Activated CD8-positive, alpha-beta T cell treated with anti-CD3 and anti-CD28 coated beads for 36 hours (primary cell): ENCODE measurements at regions of chr11 and their contacts with region 1.

Region 1: GRCh38 chr11:57249384-57250319 is 12.6 kb upstream of the APLNR start:
- DNase-seq: peak; percentile 75
- ATAC-seq: peak; percentile 60
- H3K4me3 Mint-ChIP-seq: no peak overlapping the region
- H3K27ac Mint-ChIP-seq: no peak overlapping the region
- H3K4me1 Mint-ChIP-seq: peaks cover 3% of the 10 kb centered on the region
- H3K27me3 Mint-ChIP-seq: peaks cover 27% of the 10 kb centered on the region
- CTCF ChIP-seq: peak; percentile 86

Region 2: GRCh38 chr11:56841210-56841810 is 408.3 kb before region 1 on chr11:
- CTCF ChIA-PET with region 1: interaction called, 73 read pairs
- POLR2A ChIA-PET with region 1: no interaction called
- intact Hi-C with region 1: loop called (anchors 2 kb)
- DNase-seq: peak; percentile 54
- ATAC-seq: no peak
- H3K4me3 Mint-ChIP-seq: no peak overlapping the region
- H3K27ac Mint-ChIP-seq: no peak overlapping the region
- H3K4me1 Mint-ChIP-seq: no peaks in the 10 kb centered on the region
- H3K27me3 Mint-ChIP-seq: peaks cover 2% of the 10 kb centered on the region
- CTCF ChIP-seq: peak; percentile 71

Region 3: GRCh38 chr11:57001674-57002401 is 247.8 kb before region 1 on chr11:
- CTCF ChIA-PET with region 1: interaction called, 3 read pairs
- POLR2A ChIA-PET with region 1: no interaction called
- intact Hi-C with region 1: loop called (anchors 5 kb)
- DNase-seq: peak; percentile 2
- ATAC-seq: no peak
- H3K4me3 Mint-ChIP-seq: no peak overlapping the region
- H3K27ac Mint-ChIP-seq: no peak overlapping the region
- H3K4me1 Mint-ChIP-seq: no peaks in the 10 kb centered on the region
- H3K27me3 Mint-ChIP-seq: no peaks in the 10 kb centered on the region
- CTCF ChIP-seq: peak; percentile 51

Region 4: DNA sequence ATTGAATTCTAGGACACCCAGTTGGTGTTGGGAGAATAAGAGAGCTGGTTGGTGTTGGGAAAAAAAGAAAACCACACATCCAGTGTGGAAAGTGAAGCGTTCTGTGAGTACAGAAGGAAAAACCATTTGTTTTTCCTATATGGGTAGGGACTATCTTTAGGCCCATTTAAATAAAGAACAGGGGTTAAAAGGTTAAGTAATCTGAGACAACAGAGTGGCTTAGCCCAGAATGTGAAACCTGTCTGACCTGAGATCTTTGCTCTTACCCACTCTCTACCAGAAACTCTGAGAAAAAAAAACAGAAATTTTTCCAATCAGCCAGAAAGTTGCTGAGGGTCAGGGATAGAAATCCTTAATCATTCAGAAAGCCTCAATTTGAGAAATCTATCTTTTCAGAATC is 127.7 kb before region 1 on chr11:
- CTCF ChIA-PET with region 1: interaction called, 39 read pairs
- POLR2A ChIA-PET with region 1: no interaction called
- intact Hi-C with region 1: loop called (anchors 5 kb)
- DNase-seq: no peak
- ATAC-seq: no peak
- H3K4me3 Mint-ChIP-seq: no peak overlapping the region
- H3K27ac Mint-ChIP-seq: no peak overlapping the region
- H3K4me1 Mint-ChIP-seq: no peaks in the 10 kb centered on the region
- H3K27me3 Mint-ChIP-seq: peaks cover 22% of the 10 kb centered on the region
- CTCF ChIP-seq: no peak

Region 5: GRCh38 chr11:57231539-57232253 is 18.0 kb before region 1 on chr11:
- CTCF ChIA-PET with region 1: interaction called, 13 read pairs
- POLR2A ChIA-PET with region 1: interaction called, 3 read pairs
- intact Hi-C with region 1: no loop called
- DNase-seq: no peak
- ATAC-seq: no peak
- H3K4me3 Mint-ChIP-seq: no peak overlapping the region
- H3K27ac Mint-ChIP-seq: no peak overlapping the region
- H3K4me1 Mint-ChIP-seq: no peaks in the 10 kb centered on the region
- H3K27me3 Mint-ChIP-seq: peaks cover 52% of the 10 kb centered on the region
- CTCF ChIP-seq: no peak

Region 6: GRCh38 chr11:57269571-57270021 is 19.9 kb after region 1 on chr11:
- CTCF ChIA-PET with region 1: interaction called, 10 read pairs
- POLR2A ChIA-PET with region 1: no interaction called
- intact Hi-C with region 1: no loop called
- DNase-seq: no peak
- ATAC-seq: no peak
- H3K4me3 Mint-ChIP-seq: no peak overlapping the region
- H3K27ac Mint-ChIP-seq: no peak overlapping the region
- H3K4me1 Mint-ChIP-seq: no peaks in the 10 kb centered on the region
- H3K27me3 Mint-ChIP-seq: peaks cover 14% of the 10 kb centered on the region
- CTCF ChIP-seq: no peak